ENCODE measurements at regions of chr22 and their contacts with region 1.

Region 1: DNA sequence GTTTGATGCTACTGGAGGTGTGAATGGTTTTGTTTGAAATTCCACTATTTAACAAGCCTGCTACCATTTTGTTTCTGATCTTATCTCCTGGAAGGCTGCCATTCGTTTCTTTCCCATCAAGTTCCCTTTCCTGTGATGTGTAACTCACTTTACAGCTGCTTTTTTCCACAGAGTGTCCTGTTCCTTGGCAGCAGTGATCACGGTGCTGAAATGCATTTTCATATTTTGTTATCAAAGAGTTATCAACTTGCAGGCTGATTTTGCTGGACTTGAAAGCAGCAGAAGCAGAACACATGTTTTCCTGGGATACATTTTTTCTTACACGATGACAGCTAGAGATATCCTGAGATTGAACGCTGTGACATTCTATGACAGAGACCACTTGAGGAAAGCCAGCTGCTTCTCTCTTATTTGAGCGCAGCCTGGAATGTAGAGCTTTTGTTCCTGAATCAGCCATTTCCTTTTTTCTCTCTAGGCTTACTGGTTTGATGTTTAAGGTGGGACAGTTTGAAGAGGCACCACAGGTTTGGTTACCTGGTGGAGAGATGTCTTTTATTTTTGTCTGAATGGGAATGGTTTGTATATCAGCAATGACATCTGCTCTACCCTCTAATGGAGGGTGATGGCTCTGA is 34.7 kb downstream of the PRR14L start:
- DNase-seq: no peak

Region 2: DNA sequence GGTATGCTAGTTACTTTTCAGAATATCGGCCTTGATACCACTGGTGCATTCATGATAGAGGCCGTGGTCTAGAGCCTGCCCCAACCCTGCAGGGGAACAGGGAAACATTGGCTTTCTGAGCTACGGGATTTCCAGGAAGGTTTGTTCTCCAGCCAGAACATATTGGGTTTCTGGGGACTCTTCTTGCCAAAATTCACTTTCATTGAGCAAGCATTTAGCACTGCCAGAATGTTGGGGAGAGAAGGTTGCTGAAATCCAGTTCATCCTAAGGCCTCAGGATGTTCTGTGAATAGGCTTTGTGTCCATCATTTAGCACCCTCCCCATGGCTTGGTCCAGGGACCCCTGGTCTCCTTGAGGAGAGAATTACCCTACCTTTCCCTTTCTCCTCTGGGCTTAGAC is 279.1 kb before region 1 on chr22:
- in situ Hi-C with region 1: no loop called
- DNase-seq: no peak

Region 3: GRCh38 chr22:31970490-31971444 is 255.5 kb after region 1 on chr22:
- in situ Hi-C with region 1: loop called (anchors 25 kb)
- DNase-seq: peak; percentile 88

Measured in SK-MEL-5 (cell line).